B cell (primary cell): ENCODE measurements at regions of chr12 and their contacts with region 1.

Region 1: DNA sequence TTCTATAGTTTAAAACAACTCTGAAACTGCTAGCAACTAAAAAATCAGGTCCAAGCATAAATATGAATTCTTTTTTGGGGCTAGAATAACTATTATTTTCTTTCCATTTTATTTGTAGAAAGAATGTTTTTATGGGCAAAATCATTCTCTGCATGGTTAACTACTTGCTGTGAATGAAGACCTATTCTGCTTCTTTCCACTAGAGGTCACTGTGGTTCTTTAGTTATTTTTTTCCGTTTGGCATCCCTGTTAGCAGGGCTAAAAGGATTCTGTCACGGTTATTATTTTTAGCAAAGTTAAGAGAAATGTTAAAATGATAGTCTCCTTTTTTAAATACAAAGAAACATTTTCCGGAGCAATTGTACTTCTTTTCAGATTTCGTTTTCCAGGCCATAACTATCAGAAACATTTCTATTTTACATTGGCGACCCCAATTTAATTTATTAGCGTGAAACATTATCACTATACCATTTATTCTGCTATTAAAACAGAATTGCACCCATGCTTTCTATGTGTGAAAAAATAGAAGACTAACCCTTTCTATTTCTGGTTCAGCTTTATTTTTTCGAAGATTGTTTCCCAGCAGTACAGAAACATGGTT is 404.8 kb downstream of the ATP23 start:
- DNase-seq: peak; percentile 26
- ATAC-seq: peak; percentile 45
- H3K4me3 ChIP-seq: no peak overlapping the region
- H3K4me3 Mint-ChIP-seq: no peak overlapping the region
- H3K27ac ChIP-seq: no peak overlapping the region
- H3K27ac Mint-ChIP-seq: no peak overlapping the region
- H3K4me1 ChIP-seq: no peaks in the 10 kb centered on the region
- H3K4me1 Mint-ChIP-seq: no peaks in the 10 kb centered on the region
- H3K27me3 ChIP-seq: no peaks in the 10 kb centered on the region
- H3K27me3 Mint-ChIP-seq: peaks cover 16% of the 10 kb centered on the region
- CTCF ChIP-seq: peak; percentile 92

Region 2: DNA sequence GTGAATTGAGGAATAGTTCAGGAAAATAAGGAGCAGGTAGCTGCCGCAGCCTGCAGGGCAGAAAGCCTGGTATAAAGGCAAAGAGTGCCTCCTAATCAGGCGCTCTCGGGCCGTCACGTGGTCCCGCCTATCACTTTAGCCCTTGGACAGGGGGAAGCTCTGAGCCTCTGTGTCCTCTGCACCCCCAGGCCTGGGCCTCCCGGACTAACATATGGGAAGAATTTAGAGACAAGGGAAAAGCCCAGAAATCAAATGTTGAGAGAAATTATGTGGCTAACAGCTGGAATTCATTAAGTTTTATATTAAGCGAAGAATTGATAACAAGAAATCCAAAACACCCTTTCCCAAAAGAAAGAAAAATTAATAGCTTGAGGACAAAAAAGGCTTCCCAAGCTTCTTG is 13.0 kb after region 1 on chr12:
- CTCF ChIA-PET with region 1: interaction called, 19 read pairs
- POLR2A ChIA-PET with region 1: no interaction called
- intact Hi-C with region 1: no loop called
- DNase-seq: no peak
- ATAC-seq: no peak
- H3K4me3 ChIP-seq: no peak overlapping the region
- H3K4me3 Mint-ChIP-seq: no peak overlapping the region
- H3K27ac ChIP-seq: no peak overlapping the region
- H3K27ac Mint-ChIP-seq: no peak overlapping the region
- H3K4me1 ChIP-seq: no peaks in the 10 kb centered on the region
- H3K4me1 Mint-ChIP-seq: no peaks in the 10 kb centered on the region
- H3K27me3 ChIP-seq: no peaks in the 10 kb centered on the region
- H3K27me3 Mint-ChIP-seq: peaks cover 15% of the 10 kb centered on the region
- CTCF ChIP-seq: no peak

Region 3: DNA sequence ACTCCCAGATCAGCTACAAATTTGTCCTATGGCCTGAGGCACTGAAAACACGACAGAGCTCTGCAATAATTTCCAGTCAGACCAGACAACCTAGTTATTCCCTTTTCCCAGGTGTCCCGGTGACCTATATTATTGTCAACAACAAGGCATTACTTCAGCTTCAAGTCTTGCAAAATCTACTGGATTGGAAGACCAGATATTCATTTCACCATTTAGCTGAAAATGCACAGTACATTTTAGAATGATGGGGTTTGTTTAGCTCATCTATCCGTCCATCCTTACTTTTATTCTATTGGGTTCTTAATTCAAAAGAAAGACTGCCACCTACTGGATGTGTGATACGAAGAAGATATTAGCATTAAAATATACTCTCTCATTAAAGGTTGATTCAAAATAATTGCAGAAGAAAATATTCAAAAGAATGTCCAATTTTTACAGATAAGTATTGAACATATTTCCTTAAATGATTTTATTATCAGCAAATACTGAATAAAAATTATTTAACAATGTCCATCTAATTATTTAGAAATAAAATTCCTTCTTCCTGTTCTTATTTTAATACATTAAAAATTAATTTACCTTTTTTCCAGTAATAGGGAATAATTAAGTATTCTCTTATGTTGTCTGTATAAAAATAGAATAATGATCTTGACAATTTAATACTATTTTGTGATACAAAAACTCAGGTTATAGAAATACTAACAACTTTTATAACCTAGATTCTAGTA is 819.0 kb after region 1 on chr12:
- CTCF ChIA-PET with region 1: no interaction called
- POLR2A ChIA-PET with region 1: no interaction called
- intact Hi-C with region 1: loop called (anchors 5 kb)
- DNase-seq: no peak
- ATAC-seq: no peak
- H3K4me3 ChIP-seq: no peak overlapping the region
- H3K4me3 Mint-ChIP-seq: no peak overlapping the region
- H3K27ac ChIP-seq: no peak overlapping the region
- H3K27ac Mint-ChIP-seq: no peak overlapping the region
- H3K4me1 ChIP-seq: no peaks in the 10 kb centered on the region
- H3K4me1 Mint-ChIP-seq: no peaks in the 10 kb centered on the region
- H3K27me3 ChIP-seq: no peaks in the 10 kb centered on the region
- H3K27me3 Mint-ChIP-seq: peaks cover 7% of the 10 kb centered on the region
- CTCF ChIP-seq: no peak